Caco-2 (cell line): ENCODE measurements at regions of chr9 and their contacts with region 1.

Region 1: DNA sequence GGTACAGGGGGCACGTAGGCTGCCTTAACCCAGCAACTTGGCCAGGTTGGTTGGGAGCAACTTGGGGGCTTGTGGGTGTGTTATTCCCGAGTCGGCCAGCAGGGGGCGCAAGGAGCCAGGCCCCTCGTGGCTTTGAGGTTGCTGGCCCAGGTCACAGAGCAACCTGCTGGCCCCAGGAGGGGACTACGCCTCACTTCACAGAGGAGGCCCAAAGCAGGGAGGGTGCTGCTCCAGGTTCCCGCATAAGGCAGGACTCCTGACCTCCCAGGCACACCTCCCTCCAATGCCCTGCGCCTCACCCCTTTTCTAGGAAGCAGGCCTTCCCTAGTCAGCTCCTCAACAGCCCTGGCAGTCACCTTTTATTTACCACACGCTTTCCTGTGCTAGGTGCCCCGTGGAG is 18.1 kb downstream of the KYAT1 start:
- DNase-seq: peak; percentile 85 to 89
- H3K4me3 ChIP-seq: no peak overlapping the region
- H3K4me3 Mint-ChIP-seq: no peak overlapping the region
- H3K27ac Mint-ChIP-seq: no peak overlapping the region
- H3K4me1 ChIP-seq: peaks cover 4% of the 10 kb centered on the region; the same call in 1 of the 2 replicates
- H3K4me1 Mint-ChIP-seq: no peaks in the 10 kb centered on the region
- H3K27me3 ChIP-seq: no peaks in the 10 kb centered on the region
- H3K27me3 Mint-ChIP-seq: no peaks in the 10 kb centered on the region
- CTCF ChIP-seq: peak; percentile 95 to 99

Region 2: GRCh38 chr9:128805661-128806060 is 58.0 kb before region 1 on chr9:
- CTCF ChIA-PET with region 1: no interaction called
- POLR2A ChIA-PET with region 1: no interaction called
- intact Hi-C with region 1: no loop called
- DNase-seq: no peak
- H3K4me3 ChIP-seq: no peak overlapping the region
- H3K4me3 Mint-ChIP-seq: no peak overlapping the region
- H3K27ac Mint-ChIP-seq: no peak overlapping the region
- H3K4me1 ChIP-seq: no peaks in the 10 kb centered on the region
- H3K4me1 Mint-ChIP-seq: no peaks in the 10 kb centered on the region
- H3K27me3 ChIP-seq: no peaks in the 10 kb centered on the region
- H3K27me3 Mint-ChIP-seq: no peaks in the 10 kb centered on the region
- CTCF ChIP-seq: no peak

Region 3: GRCh38 chr9:128875790-128876160 is 12.1 kb after region 1 on chr9:
- CTCF ChIA-PET with region 1: interaction called, 14 read pairs
- POLR2A ChIA-PET with region 1: no interaction called
- intact Hi-C with region 1: no loop called
- DNase-seq: peak; percentile 84 to 89
- H3K4me3 ChIP-seq: no peak overlapping the region
- H3K4me3 Mint-ChIP-seq: peak overlapping the region; percentile 22
- H3K27ac Mint-ChIP-seq: peak overlapping the region; percentile 79
- H3K4me1 ChIP-seq: peaks cover 31% of the 10 kb centered on the region
- H3K4me1 Mint-ChIP-seq: peaks cover 3% of the 10 kb centered on the region
- H3K27me3 ChIP-seq: no peaks in the 10 kb centered on the region
- H3K27me3 Mint-ChIP-seq: no peaks in the 10 kb centered on the region
- CTCF ChIP-seq: no peak

Region 4: GRCh38 chr9:128881901-128882681 is 18.4 kb after region 1 on chr9 and contains the starts of genes KYAT1 and LRRC8A:
- CTCF ChIA-PET with region 1: interaction called, 4 read pairs
- POLR2A ChIA-PET with region 1: no interaction called
- intact Hi-C with region 1: loop called (anchors 1 kb)
- DNase-seq: peak; percentile 95 to 97
- H3K4me3 ChIP-seq: peak within 1 kb of the TSS; percentile 69
- H3K4me3 Mint-ChIP-seq: peak within 1 kb of the TSS; percentile 97
- H3K27ac Mint-ChIP-seq: peak within 1 kb of the TSS; percentile 96
- H3K4me1 ChIP-seq: peaks cover 16% of the 10 kb centered on the region
- H3K4me1 Mint-ChIP-seq: peaks cover 6% of the 10 kb centered on the region
- H3K27me3 ChIP-seq: no peaks in the 10 kb centered on the region
- H3K27me3 Mint-ChIP-seq: no peaks in the 10 kb centered on the region
- CTCF ChIP-seq: peak in 1 of 2 experiments; percentile 1
- total RNA-seq, gene KYAT1: 6.9 and 7.8 TPM in 2 replicates
- total RNA-seq, gene LRRC8A: 21.9 and 22.4 TPM in 2 replicates

Region 5: DNA sequence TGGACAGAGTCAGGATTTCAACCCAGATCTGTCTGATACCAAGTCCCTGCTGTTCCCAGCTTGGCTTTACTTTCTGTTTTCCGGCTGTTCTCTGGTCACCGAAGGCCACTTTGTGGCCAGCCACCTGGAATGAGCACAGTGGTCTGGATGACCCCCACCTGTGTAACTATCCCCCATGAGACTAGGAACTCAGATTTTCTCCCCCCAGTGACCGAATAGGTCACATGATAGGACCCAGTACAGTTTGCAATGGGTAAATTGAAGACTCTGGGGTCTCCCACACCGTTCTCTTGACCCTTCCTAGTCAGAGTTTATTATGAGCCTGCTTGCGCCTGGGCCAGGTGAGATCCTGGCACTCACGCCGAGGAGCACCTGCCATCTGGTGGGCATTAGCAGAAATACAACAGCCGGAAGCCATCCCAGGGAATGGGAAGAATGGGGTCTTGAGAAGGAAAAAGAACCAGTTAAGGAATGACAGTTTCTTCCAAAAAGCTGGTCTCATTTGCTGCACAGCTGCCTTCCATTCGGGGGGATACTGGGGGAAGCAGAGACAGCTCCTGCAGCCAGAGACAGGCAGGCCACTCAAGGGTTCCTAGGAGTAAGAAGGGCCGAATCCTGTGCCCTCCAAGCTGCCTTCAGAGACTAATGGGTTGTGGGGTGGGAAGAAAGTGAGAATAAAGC is 64.2 kb after region 1 on chr9:
- CTCF ChIA-PET with region 1: interaction called, 5 read pairs
- POLR2A ChIA-PET with region 1: no interaction called
- intact Hi-C with region 1: loop called (anchors 1 kb)
- DNase-seq: peak; percentile 71 to 80
- H3K4me3 ChIP-seq: no peak overlapping the region
- H3K4me3 Mint-ChIP-seq: no peak overlapping the region
- H3K27ac Mint-ChIP-seq: peak overlapping the region; percentile 62
- H3K4me1 ChIP-seq: peaks cover 5% of the 10 kb centered on the region; the same call in 1 of the 2 replicates
- H3K4me1 Mint-ChIP-seq: peaks cover 8% of the 10 kb centered on the region
- H3K27me3 ChIP-seq: no peaks in the 10 kb centered on the region
- H3K27me3 Mint-ChIP-seq: no peaks in the 10 kb centered on the region
- CTCF ChIP-seq: peak; percentile 85

Region 6: DNA sequence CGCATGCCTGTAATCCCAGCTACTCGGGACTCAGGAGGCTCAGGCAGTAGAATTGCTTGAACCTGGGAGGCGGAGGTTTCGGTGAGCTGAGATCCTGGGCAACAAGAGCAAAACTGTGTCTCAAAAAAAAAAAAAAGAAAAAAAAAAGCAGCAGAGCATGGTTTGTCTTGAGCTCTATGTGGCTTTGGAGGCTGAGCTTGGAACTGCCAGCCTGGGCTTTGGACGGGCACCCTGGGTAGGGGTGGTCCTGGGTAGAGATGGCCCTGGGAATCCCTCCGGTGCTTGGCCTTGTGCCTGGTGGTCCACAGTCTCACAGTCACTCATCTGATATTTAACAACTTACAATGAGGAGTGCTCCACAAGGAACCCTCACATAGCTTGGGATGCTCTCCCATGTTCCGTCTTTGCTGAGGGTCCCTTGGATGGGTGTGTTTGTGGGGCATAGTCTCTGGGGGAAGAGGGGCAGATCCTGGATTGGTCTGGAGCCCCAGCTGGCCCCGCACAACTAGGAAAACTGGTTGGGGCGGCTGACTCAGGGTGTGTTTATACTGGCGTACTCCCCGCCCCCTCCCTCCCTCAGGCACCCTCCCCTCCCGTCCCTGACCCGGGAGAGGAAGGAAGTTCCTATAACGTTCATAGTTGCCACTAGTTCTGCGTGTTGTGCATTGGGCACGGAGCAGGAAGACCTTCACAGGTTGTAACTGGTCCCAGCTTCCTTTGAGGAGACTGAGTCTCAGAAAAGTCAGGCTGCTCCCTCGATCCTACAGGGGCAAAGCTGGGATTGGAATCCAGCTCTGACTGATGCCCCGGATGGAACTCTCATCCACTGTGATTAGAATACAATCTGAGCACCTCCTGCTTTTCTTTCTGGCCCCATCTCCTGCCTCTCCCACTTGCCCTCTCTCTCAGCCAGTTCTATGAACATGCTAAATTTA is 303.2 kb after region 1 on chr9:
- CTCF ChIA-PET with region 1: no interaction called
- POLR2A ChIA-PET with region 1: no interaction called
- intact Hi-C with region 1: no loop called
- DNase-seq: peak; percentile 87 to 89
- H3K4me3 ChIP-seq: peak overlapping the region; percentile 15
- H3K4me3 Mint-ChIP-seq: peak overlapping the region; percentile 66
- H3K27ac Mint-ChIP-seq: peak overlapping the region; percentile 71
- H3K4me1 ChIP-seq: peaks cover 18% of the 10 kb centered on the region
- H3K4me1 Mint-ChIP-seq: peaks cover 32% of the 10 kb centered on the region
- H3K27me3 ChIP-seq: no peaks in the 10 kb centered on the region
- H3K27me3 Mint-ChIP-seq: no peaks in the 10 kb centered on the region
- CTCF ChIP-seq: no peak